ENCODE measurements at regions of chr16 and their contacts with region 1.

Region 1: GRCh38 chr16:67672739-67673662 is 6.4 kb downstream of the C16orf86 start:
- DNase-seq: peak; percentile 73
- ATAC-seq: peak; percentile 19
- H3K4me3 Mint-ChIP-seq: no peak overlapping the region
- H3K27ac Mint-ChIP-seq: no peak overlapping the region
- H3K4me1 Mint-ChIP-seq: peaks cover 3% of the 10 kb centered on the region
- H3K27me3 Mint-ChIP-seq: no peaks in the 10 kb centered on the region

Region 2: DNA sequence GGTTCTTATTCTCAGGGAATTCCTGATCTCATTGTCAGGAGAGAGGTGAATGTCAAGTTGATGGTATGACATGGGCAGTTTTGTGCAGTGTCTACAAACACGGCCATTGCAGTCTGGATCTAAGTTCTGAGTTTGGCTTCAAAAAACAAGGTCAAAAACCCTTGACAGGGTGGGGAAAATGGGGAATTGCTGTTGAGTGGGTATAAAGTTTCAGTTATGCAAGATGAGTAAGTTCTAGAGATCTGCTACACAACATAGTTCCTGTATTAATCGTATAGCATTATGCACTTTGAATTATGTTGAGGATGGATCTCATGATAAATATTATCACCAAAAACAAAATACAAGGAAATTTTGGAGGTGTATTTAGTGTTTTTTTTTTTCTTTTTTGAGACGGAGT is 64.6 kb before region 1 on chr16:
- CTCF ChIA-PET with region 1: no interaction called
- POLR2A ChIA-PET with region 1: no interaction called
- DNase-seq: no peak
- ATAC-seq: no peak
- H3K4me3 Mint-ChIP-seq: no peak overlapping the region
- H3K27ac Mint-ChIP-seq: no peak overlapping the region
- H3K4me1 Mint-ChIP-seq: no peaks in the 10 kb centered on the region
- H3K27me3 Mint-ChIP-seq: no peaks in the 10 kb centered on the region

Region 3: DNA sequence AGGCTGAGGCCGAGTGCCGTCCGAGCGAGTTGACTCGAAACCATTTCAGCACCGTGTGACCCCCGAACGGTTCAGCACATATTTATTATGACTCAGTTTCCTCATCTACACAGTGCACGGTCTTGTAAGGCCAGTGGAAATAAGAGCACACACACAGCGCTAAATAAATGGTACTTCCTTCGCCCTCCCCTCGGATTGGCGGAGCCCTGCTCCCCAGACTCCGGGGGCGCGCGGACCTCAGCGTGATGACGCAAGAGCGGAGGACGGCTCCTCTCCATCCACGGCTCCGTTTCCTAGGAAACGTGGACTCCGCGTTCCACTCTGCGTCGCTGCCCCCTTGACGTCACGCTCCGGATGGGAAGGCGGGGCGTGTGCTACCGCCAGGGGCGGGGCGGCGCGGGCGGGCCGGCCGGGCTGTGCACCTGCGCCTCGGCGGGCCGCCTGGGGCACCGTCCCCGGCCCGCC is 12.4 kb before region 1 on chr16 and contains the start of gene PARD6A:
- CTCF ChIA-PET with region 1: interaction called, 13 read pairs
- POLR2A ChIA-PET with region 1: interaction called, 3 read pairs
- DNase-seq: peak; percentile 98
- ATAC-seq: peak; percentile 78
- H3K4me3 Mint-ChIP-seq: peak within 1 kb of the TSS; percentile 89
- H3K27ac Mint-ChIP-seq: peak within 1 kb of the TSS; percentile 96
- H3K4me1 Mint-ChIP-seq: peaks cover 31% of the 10 kb centered on the region
- H3K27me3 Mint-ChIP-seq: no peaks in the 10 kb centered on the region
- total RNA-seq, gene PARD6A: 13.2 to 14.7 TPM

Region 4: DNA sequence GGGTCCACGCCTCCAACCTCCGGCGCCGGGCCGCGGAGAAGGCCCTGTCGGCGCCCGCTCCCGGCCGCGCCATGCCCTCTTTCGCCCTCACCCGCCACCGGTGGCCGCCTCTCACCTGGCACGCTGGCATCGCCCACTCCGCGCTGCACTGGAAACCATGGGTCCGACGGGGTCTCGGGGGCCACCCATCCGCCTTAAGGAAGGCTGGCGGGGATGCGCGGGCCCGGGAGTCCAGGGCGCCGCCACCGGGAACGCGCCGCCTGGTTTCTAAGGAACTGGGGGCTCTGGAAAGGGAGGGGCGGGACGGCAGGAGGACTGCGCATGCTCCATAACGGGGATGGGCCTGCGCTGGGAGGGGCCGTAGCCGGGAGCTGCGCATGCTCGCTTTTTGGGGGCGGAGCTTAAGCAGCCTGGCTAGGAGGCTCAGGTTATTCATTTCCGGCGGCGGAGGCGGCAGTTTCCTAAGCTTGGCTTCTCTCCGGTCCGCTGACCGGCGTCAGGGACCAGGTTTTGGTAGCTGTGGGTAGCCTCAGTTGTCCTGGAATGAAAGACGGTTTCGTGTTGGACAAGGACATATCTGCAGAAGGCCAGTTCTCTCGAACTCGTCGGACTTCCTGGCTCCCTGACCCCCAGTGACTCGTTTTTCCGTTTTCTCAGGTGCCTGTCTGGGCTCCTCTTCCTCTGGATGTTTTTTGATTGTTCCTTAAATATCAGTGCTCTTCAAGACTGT is 46.2 kb after region 1 on chr16 and contains the start of gene GFOD2:
- CTCF ChIA-PET with region 1: interaction called, 11 read pairs
- POLR2A ChIA-PET with region 1: no interaction called
- DNase-seq: peak; percentile 98
- ATAC-seq: peak; percentile 92
- H3K4me3 Mint-ChIP-seq: peak within 1 kb of the TSS; percentile 99
- H3K27ac Mint-ChIP-seq: peak within 1 kb of the TSS; percentile 99
- H3K4me1 Mint-ChIP-seq: peaks cover 31% of the 10 kb centered on the region
- H3K27me3 Mint-ChIP-seq: no peaks in the 10 kb centered on the region
- total RNA-seq, gene GFOD2: 12.5 to 14.0 TPM

Region 5: DNA sequence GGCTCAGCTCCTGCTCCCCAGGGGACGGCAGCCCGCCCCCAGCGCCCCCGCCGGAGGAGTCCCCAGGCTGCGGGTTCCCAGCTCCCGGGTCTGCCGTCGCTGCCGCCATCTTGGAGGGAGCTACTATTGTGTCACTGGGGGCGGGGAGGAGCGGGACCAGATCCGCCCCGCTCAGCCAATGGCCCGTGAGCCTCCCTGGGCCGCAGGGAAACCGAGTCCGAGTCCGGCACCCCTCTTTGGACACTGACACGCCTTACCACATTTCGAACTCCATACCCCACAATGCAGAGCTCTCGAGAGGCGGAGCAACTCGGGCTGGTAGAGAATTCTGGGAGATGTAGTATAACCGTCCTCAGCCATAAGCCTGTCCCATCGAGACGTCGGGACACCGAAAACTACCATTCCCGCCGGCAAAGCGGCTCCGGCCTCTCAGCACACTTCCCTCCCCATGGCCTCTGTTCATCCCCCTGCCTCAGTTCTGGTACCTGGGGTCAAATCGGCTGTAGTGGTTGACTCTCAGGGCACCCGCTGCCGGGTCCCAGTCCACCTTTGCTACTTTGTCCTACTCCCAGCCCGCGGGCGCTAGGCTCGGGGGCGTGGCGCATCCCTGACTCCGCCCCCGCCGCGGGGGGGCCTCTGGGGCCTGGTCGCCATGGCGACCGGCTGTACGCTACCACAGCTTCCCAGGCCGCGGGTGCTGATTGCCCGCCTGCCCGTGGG is 133.6 kb after region 1 on chr16 and contains the starts of genes RANBP10 and TSNAXIP1:
- CTCF ChIA-PET with region 1: interaction called, 11 read pairs
- POLR2A ChIA-PET with region 1: no interaction called
- DNase-seq: peak; percentile 98
- ATAC-seq: peak; percentile 94
- H3K4me3 Mint-ChIP-seq: peak within 1 kb of the TSS; percentile 94
- H3K27ac Mint-ChIP-seq: peak within 1 kb of the TSS; percentile 90
- H3K4me1 Mint-ChIP-seq: peaks cover 40% of the 10 kb centered on the region
- H3K27me3 Mint-ChIP-seq: no peaks in the 10 kb centered on the region
- total RNA-seq, gene RANBP10: 25.9 to 30.5 TPM
- total RNA-seq, gene TSNAXIP1: 0.47 to 0.63 TPM

Region 6: DNA sequence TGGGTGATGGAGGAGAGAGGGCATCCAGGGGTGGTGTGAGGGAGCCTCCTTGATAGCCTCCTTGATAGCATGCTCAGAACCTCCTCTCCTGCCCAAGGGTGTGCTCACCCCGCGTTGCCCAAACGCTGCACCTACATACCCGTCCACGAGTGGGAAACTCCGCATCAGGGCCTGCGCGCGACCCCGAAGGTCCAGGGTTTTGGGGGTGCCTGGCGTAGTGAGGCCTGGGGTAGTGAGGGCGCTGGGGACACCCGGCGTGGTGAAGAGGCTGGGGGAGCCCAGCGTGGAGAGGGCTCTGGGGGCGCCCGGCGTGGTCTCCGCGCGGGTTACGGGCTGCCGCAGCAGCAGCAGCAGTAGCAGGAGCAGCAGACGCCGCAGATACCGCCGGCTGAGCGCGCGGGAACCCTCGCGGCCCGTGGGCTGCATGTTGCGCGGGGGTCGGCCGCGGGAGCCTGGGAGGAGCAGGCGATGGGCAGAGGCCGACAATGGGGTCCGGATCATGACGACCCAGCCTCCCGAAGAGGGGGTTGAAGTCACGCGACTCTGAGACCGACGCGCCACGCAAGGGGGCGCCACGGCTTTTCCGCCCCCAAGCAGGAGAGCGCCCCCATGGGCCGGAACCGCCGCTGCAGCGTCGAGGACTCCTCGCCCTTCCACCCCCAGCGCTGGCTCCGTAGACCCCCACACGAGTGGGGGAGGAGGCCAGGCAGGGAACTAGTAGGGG is 307.1 kb after region 1 on chr16 and contains the start of gene DPEP3:
- CTCF ChIA-PET with region 1: no interaction called
- POLR2A ChIA-PET with region 1: no interaction called
- DNase-seq: no peak
- ATAC-seq: no peak
- H3K4me3 Mint-ChIP-seq: no peak within 1 kb of the TSS
- H3K27ac Mint-ChIP-seq: no peak within 1 kb of the TSS
- H3K4me1 Mint-ChIP-seq: peaks cover 27% of the 10 kb centered on the region
- H3K27me3 Mint-ChIP-seq: peaks cover 6% of the 10 kb centered on the region
- total RNA-seq, gene DPEP3: not detected

Measured in activated CD8-positive, alpha-beta T cell treated with anti-CD3 and anti-CD28 coated beads, Interleukin-2, amount 10 ng/mL, durations not matched to agents 7 days and 5 days (primary cell).